Posterior vena cava (tissue), 2 donors: ENCODE measurements at regions of chr7 and their contacts with region 1.

Region 1: GRCh38 chr7:129569811-129570215 is 41.7 kb upstream of the NRF1 start:
- DNase-seq: no peak

Region 2: GRCh38 chr7:131170440-131171105 is 1600.8 kb after region 1 on chr7:
- intact Hi-C with region 1: loop called in 1 of 2 experiments (anchors 10 kb)
- DNase-seq: no peak